GM12878 (cell line): ENCODE measurements at regions of chr10 and their contacts with region 1.

Region 1: DNA sequence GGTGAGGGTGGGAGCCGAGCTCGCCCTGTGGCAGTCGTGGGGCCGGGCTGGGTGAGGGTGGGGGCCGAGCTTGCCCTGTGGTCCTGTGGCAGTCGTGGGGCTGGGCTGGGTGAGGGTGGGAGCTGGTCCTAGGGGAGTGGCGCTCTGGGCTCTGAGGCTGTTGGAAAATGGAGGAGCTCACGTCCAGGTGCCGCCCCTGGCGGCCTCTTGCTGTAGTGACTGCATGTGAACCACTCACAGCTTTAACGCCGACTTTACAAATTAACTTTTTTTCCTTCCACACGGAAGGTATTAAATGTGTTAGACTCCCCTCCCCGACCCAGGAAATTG is 312.6 kb downstream of the WDR37 start:
- DNase-seq: no peak
- ATAC-seq: peak; percentile 93
- H3K4me3 ChIP-seq: no peak overlapping the region
- H3K27ac ChIP-seq: no peak overlapping the region
- H3K4me1 ChIP-seq: no peaks in the 10 kb centered on the region
- H3K27me3 ChIP-seq: no peaks in the 10 kb centered on the region
- CTCF ChIP-seq: peak; percentile 30 to 60 (median 51); a peak in 5 of 6 replicates
- EP300 ChIP-seq: no peak
- POLR2A ChIP-seq: no peak
- RAD21 ChIP-seq: no peak

Region 2: DNA sequence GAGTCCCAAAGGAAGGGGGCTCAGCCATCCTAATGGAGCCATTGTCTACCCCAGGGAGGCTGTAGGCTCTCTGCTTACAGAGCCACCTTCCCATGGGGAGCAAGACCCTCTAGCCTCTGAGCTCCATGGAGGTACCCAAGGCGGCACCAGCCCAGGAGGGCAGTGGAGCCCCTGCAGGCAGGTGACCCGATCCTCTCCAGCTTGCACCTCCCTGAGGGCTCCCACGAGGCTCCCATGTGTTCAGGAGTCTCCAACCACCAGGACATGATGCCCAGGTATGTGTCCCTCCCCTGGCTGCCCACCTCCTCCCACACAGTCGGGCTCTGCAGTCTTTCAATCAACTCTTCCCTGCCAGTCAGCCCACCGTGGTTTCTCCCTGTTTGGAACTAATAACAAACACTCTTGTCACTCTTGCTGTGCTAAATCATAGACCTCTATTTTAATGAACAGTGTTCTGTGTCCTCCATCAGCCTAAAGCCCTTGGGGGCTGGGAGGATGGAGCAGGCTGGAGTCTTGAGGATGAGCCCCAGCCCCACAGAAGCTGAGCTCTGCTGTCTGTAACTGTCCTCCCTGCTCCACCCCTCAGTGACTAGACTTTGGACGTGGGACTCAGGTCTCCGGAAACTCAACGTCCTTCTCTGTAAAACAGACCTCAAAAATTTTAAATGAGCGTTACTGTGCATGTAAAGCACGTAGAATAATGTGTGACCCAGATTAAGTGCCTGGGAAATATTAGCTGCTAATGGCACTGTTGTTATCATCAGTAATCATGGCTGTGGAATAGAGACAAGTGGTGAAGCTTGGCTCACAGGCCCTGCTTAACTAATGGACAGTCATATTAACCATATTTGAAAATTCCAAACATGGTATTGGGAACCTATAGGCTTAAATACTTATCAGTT is 13.7 kb before region 1 on chr10:
- CTCF ChIA-PET with region 1: interaction called, 11 read pairs
- POLR2A ChIA-PET with region 1: interaction called, 3 read pairs
- RAD21 ChIA-PET with region 1: no interaction called
- SMC1A ChIA-PET with region 1: no interaction called
- in situ Hi-C with region 1: no loop called
- intact Hi-C with region 1: no loop called
- DNase-seq: no peak
- ATAC-seq: no peak
- H3K4me3 ChIP-seq: no peak overlapping the region
- H3K27ac ChIP-seq: no peak overlapping the region
- H3K4me1 ChIP-seq: no peaks in the 10 kb centered on the region; the same call in 1 of the 2 replicates
- H3K27me3 ChIP-seq: no peaks in the 10 kb centered on the region; a peak in 1 of 4 replicates
- CTCF ChIP-seq: no peak
- EP300 ChIP-seq: no peak
- POLR2A ChIP-seq: no peak
- RAD21 ChIP-seq: no peak